ENCODE measurements at regions of chr5 and their contacts with region 1.

Region 1: GRCh38 chr5:159459951-159460538 is 129.8 kb upstream of the IL12B start:
- DNase-seq: no peak
- H3K4me3 ChIP-seq: no peak overlapping the region
- H3K4me3 Mint-ChIP-seq: no peak overlapping the region
- H3K27ac Mint-ChIP-seq: no peak overlapping the region
- H3K4me1 ChIP-seq: peaks cover 22% of the 10 kb centered on the region
- H3K4me1 Mint-ChIP-seq: peaks cover 23% of the 10 kb centered on the region
- H3K27me3 ChIP-seq: no peaks in the 10 kb centered on the region
- H3K27me3 Mint-ChIP-seq: no peaks in the 10 kb centered on the region
- CTCF ChIP-seq: no peak

Region 2: GRCh38 chr5:159489779-159490178 is 29.7 kb after region 1 on chr5:
- CTCF ChIA-PET with region 1: no interaction called
- POLR2A ChIA-PET with region 1: no interaction called
- intact Hi-C with region 1: no loop called
- DNase-seq: no peak
- H3K4me3 ChIP-seq: no peak overlapping the region
- H3K4me3 Mint-ChIP-seq: no peak overlapping the region
- H3K27ac Mint-ChIP-seq: no peak overlapping the region
- H3K4me1 ChIP-seq: no peaks in the 10 kb centered on the region
- H3K4me1 Mint-ChIP-seq: no peaks in the 10 kb centered on the region
- H3K27me3 ChIP-seq: no peaks in the 10 kb centered on the region
- H3K27me3 Mint-ChIP-seq: no peaks in the 10 kb centered on the region
- CTCF ChIP-seq: no peak

Region 3: GRCh38 chr5:159510282-159510681 is 50.2 kb after region 1 on chr5:
- CTCF ChIA-PET with region 1: no interaction called
- POLR2A ChIA-PET with region 1: no interaction called
- intact Hi-C with region 1: loop called (anchors 5 kb)
- DNase-seq: peak; percentile 59 to 78
- H3K4me3 ChIP-seq: no peak overlapping the region
- H3K4me3 Mint-ChIP-seq: no peak overlapping the region
- H3K27ac Mint-ChIP-seq: no peak overlapping the region
- H3K4me1 ChIP-seq: peaks cover 5% of the 10 kb centered on the region; the same call in 1 of the 2 replicates
- H3K4me1 Mint-ChIP-seq: no peaks in the 10 kb centered on the region
- H3K27me3 ChIP-seq: no peaks in the 10 kb centered on the region
- H3K27me3 Mint-ChIP-seq: peaks cover 3% of the 10 kb centered on the region
- CTCF ChIP-seq: no peak

Region 4: DNA sequence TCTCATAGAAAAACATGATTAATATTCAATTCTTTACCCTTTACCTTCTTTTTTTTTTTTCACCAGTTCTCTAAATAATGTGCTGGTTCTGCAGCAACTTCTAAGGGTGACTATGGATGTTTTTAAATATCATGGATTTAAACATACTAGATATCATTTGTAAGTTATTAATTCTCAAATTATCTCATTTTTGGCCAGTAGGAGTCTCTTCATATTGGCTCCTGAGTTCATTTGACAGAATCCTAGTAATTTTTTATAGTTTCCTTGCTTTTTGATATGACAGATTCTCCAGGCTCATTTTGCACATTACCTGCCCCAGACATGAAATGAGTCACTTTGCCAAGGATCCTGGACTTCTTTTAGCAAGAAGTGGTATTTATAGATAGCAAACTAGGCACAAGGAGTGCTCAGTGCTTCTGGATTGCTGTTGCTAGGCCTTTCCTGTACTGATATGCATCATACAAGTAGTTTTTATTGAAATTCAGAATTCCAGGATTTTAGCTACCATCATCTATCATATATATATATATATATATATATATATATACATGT is 71.6 kb after region 1 on chr5:
- CTCF ChIA-PET with region 1: no interaction called
- POLR2A ChIA-PET with region 1: no interaction called
- intact Hi-C with region 1: no loop called
- DNase-seq: no peak
- H3K4me3 ChIP-seq: no peak overlapping the region
- H3K4me3 Mint-ChIP-seq: no peak overlapping the region
- H3K27ac Mint-ChIP-seq: no peak overlapping the region
- H3K4me1 ChIP-seq: no peaks in the 10 kb centered on the region
- H3K4me1 Mint-ChIP-seq: no peaks in the 10 kb centered on the region
- H3K27me3 ChIP-seq: no peaks in the 10 kb centered on the region
- H3K27me3 Mint-ChIP-seq: no peaks in the 10 kb centered on the region
- CTCF ChIP-seq: no peak

Region 5: GRCh38 chr5:159571495-159572238 is 111.6 kb after region 1 on chr5:
- CTCF ChIA-PET with region 1: no interaction called
- POLR2A ChIA-PET with region 1: no interaction called
- intact Hi-C with region 1: loop called (anchors 5 kb)
- DNase-seq: peak; percentile 81 to 85
- H3K4me3 ChIP-seq: no peak overlapping the region
- H3K4me3 Mint-ChIP-seq: peak overlapping the region; percentile 11
- H3K27ac Mint-ChIP-seq: no peak overlapping the region
- H3K4me1 ChIP-seq: peaks cover 16% of the 10 kb centered on the region
- H3K4me1 Mint-ChIP-seq: peaks cover 16% of the 10 kb centered on the region
- H3K27me3 ChIP-seq: no peaks in the 10 kb centered on the region
- H3K27me3 Mint-ChIP-seq: no peaks in the 10 kb centered on the region
- CTCF ChIP-seq: no peak

Region 6: DNA sequence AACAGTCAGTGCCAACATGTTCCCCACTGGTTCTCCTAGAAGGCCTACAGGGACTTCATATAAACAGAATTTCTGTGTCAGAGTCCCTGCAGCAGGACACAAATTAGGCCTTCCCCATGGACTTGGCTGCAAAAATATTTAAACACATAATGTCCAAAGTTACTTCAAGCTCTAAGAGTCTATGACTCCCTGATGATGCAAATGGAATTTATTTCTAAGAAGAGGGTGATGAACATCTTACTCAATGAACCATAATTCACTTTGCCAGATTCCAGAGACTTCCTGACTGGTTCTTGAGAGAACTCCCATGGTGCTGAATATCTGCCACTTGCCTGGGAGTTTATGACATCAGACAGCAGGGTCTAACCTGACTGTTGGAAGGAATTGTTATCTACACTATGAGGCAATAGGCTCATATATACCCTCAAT is 423.5 kb after region 1 on chr5:
- CTCF ChIA-PET with region 1: no interaction called
- POLR2A ChIA-PET with region 1: no interaction called
- intact Hi-C with region 1: no loop called
- DNase-seq: no peak
- H3K4me3 ChIP-seq: no peak overlapping the region
- H3K4me3 Mint-ChIP-seq: no peak overlapping the region
- H3K27ac Mint-ChIP-seq: no peak overlapping the region
- H3K4me1 ChIP-seq: no peaks in the 10 kb centered on the region; the same call in 1 of the 2 replicates
- H3K4me1 Mint-ChIP-seq: peaks cover 11% of the 10 kb centered on the region
- H3K27me3 ChIP-seq: no peaks in the 10 kb centered on the region
- H3K27me3 Mint-ChIP-seq: peaks cover 12% of the 10 kb centered on the region
- CTCF ChIP-seq: no peak

Measured in Caco-2 (cell line).